BJ (cell line): ENCODE measurements at regions of chr5 and their contacts with region 1.

Region 1: DNA sequence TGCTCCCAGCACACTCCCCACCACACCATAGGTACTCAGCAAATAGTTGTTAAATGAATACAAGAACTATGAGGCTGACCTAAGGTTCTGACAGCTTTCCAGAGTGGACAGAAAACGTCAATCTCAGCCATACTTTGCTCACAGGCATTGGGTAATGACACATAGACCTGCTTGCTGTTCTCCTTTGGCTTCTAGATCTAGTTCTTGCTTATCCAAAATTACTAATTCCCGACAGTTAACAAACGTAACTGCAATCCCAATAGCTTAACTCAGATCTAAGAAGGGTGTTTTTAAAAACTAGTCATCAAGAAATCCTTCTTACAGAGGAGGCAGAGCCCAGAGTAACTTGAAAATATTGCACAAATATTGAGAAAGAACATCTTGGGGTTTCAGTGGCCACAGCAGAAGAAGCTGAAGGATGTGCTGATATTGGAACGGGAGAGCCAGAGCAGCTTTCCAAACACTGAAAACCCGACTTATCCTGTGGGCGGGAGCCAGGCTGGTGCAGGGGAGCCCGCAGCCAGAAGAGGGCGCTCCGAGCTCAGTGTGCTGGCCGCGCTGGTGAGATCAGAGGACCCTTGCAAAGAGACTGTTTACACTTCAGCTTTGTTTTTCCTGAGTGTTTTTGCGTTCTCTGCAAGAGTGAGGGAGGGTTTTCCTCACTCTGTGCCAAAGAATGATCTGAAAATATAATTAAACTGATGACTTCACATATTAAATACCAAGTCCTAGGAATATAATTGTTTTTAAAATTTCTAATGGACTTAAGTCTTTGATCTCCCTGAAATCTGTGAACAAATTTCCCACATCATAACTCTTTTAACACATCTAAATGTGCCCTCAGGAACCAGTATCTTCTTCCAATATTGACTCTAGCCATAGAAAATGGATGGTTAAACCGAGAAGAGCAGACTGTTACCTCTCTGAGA is 30.3 kb downstream of the FGF1 start:
- DNase-seq: no peak
- H3K4me3 ChIP-seq: no peak overlapping the region
- H3K27me3 ChIP-seq: no peaks in the 10 kb centered on the region
- CTCF ChIP-seq: peak; percentile 100

Region 2: DNA sequence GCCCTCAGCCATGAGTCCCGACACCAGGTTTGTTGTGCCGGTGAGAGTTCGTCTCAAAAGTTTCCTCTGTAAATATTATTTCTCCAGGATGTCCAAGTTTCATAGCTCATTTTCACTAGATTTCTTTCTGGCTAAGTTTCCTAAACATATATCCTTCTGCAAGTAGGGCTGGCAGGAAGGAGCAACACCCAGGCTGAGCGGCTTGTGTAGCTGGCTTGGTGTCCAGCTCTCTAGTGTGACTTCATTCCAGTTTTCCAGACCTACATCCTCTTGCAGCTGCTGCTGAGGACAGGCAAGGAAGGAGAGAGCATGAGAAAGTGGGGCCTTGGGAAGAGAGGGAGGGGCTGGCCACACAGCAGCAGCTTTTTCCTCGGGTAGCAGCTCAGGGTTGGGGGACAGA is 50.0 kb before region 1 on chr5:
- CTCF ChIA-PET with region 1: interaction called, 44 read pairs
- POLR2A ChIA-PET with region 1: no interaction called
- DNase-seq: no peak
- H3K4me3 ChIP-seq: no peak overlapping the region
- H3K27me3 ChIP-seq: no peaks in the 10 kb centered on the region
- CTCF ChIP-seq: no peak

Region 3: DNA sequence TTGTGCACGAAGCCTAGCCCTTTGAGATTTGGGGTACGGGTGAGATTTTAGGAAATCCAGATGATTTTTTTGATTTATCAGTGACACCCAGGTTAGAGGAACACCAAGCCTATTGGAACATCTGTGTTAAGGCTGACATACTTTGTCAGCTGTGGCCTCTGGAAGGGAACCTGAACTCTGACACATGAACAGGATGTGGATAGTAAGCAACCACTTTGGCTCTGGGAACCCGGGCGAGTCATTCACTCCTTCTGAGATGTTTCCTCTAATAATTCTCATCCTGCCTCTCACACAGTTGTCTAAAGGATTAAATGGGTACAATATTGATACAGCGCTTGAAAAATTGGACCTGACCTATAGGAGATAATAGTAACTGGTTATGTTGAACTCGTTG is 37.5 kb before region 1 on chr5:
- CTCF ChIA-PET with region 1: interaction called, 12 read pairs
- POLR2A ChIA-PET with region 1: no interaction called
- DNase-seq: no peak
- H3K4me3 ChIP-seq: no peak overlapping the region
- H3K27me3 ChIP-seq: no peaks in the 10 kb centered on the region
- CTCF ChIP-seq: no peak

Region 4: GRCh38 chr5:142644640-142645361 is 10.8 kb before region 1 on chr5:
- CTCF ChIA-PET with region 1: interaction called, 60 read pairs
- POLR2A ChIA-PET with region 1: interaction called, 9 read pairs
- DNase-seq: peak; percentile 99
- H3K4me3 ChIP-seq: no peak overlapping the region
- H3K27me3 ChIP-seq: no peaks in the 10 kb centered on the region
- CTCF ChIP-seq: no peak

Region 5: DNA sequence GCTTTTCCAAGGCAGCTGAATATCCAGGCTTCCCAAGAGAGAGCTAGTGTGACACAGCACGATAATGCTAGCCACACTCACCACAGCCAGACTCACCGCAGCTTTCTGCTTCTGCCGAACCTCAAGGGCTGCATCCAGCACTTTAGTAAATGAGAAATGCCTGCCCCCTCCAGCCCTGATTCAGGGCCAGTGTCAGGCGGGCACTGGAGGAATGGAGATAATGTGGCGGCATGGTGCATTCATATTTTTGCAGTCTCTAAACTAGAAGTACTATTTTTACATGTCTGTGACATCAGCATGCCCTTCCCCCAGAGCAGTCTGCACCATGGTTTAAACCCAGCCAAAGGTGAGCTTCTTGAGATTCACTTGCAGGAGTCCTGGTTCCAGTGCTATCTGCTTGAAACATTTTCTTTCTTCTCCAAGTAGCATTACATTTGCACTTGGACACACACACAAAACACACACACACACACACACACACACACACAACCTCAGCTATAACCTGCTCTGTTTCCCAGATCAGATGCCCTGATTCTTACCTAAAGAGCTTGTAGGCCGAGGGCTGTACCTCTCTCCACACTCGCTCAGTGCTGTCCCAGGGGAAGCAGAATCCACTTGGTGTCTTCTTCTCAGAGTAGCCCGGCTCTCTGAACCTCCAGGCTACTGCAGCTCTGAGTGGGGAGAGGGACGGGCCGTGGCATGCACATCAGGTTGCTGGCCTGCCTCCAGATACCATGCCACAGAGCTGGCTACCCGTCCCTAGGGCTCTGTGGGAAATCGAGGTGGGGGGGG is 30.0 kb after region 1 on chr5 and contains the start of gene FGF1:
- CTCF ChIA-PET with region 1: interaction called, 385 read pairs
- POLR2A ChIA-PET with region 1: no interaction called
- DNase-seq: no peak
- H3K4me3 ChIP-seq: no peak within 1 kb of the TSS
- H3K27me3 ChIP-seq: peaks cover 2% of the 10 kb centered on the region; the same call in 1 of the 2 replicates
- CTCF ChIP-seq: no peak
- polyA plus RNA-seq, gene FGF1: 14.8 and 19.2 TPM in 2 replicates